ENCODE measurements at regions of chr11 and their contacts with region 1.

Region 1: DNA sequence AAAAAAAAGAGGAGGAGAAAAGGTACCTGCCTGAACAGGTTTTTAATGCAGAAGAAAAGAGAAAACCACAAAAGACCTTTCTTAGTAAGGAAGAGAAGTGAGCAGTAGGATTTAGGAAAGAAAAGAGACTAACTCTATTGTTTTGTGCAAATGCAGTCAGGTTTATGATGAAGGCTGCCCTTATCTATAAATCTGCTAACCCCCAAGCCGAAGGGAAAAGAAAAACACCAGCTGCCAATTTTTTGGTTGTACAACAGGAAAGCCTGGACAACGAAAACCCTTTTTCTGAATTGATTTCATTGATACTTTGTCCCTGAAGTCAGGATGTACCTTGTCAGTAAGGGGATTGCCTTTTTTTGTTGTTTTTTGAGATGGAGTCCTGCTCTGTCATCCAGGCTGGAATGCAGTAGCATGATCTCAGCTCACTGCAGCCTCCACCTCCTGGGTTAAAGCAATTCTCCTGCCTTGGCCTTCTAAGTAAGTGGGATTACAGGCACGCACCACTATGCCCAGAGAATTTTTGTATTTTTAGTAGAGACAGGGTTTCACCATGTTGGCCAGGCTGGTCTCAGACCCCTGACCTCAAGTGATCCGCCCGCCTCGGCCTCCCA is 21.2 kb downstream of the POLD4 start:
- DNase-seq: no peak
- CTCF ChIP-seq: no peak

Region 2: DNA sequence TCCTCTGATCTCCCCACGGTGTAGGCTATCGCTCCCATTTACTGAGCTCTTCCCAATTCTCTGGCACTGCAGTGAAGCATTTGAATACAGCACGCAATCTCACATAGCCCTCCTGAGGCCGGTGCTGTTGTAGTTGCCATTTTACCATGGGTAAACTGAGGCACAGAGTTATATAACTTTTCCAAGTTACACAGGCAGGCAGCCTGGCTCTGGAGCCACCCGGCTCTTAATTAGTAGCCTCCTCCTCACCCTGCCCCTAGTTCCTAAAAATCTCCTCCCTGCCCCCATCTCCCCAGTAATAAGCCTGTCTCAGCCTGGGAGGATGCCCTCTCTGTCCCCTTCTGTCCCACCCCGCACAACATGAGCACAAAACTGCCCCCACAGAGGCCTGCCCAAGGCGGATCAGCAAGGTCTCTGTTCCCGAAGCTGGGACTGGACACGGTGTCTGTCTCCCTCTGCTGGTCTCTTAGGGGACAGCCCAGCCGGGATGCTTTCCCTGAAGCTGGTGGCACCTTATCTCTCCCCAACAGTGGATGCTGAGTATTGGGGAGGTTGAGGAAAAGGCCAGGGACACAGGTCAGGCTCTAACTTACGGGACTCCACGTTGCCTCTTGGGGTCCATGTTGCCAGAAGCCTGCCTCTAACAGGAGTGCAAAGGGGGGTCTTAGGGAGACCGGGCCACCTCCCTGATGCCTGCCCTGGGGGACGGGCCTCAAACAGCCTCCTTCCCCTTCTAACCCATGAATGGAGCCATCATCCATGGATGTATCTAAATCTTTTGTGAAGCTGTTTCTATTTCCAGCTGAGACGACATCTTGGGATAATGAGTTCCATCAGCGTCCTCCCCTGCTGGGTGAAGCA is 50.3 kb after region 1 on chr11:
- in situ Hi-C with region 1: loop called (anchors 10 kb)
- DNase-seq: peak; percentile 84
- CTCF ChIP-seq: peak; percentile 95

Region 3: GRCh38 chr11:67500831-67501715 is 168.9 kb after region 1 on chr11:
- in situ Hi-C with region 1: no loop called
- DNase-seq: no peak
- CTCF ChIP-seq: no peak

Region 4: GRCh38 chr11:67656278-67656922 is 324.2 kb after region 1 on chr11:
- in situ Hi-C with region 1: no loop called
- DNase-seq: peak; percentile 60
- CTCF ChIP-seq: no peak